Activated CD4-positive, alpha-beta T cell treated with anti-CD3 and anti-CD28 coated beads for 36 hours (primary cell): ENCODE measurements at regions of chr12 and their contacts with region 1.

Region 1: DNA sequence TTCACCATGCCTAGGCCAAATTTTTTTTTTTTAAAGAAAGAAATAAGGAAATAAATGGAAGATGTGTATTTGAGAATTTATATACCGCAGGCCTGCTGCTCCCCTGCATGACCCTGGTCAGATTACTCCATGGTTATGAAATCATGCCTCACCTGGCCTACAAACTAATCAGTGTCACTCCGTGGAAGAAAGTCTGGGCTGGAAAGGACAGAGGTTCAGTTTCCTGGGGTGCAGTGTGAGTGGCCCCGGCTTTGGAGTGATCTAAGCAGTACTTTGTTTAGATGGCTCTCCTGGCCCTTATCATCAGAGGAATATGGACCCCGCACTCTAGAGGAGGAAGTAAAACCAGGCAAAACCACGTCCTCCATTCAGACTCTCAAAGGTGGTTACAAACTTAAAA is 9.6 kb downstream of the APOBEC1 start:
- DNase-seq: no peak
- ATAC-seq: no peak
- H3K4me3 Mint-ChIP-seq: no peak overlapping the region
- H3K27ac Mint-ChIP-seq: no peak overlapping the region
- H3K4me1 Mint-ChIP-seq: no peaks in the 10 kb centered on the region
- H3K27me3 Mint-ChIP-seq: peaks cover 2% of the 10 kb centered on the region

Region 2: DNA sequence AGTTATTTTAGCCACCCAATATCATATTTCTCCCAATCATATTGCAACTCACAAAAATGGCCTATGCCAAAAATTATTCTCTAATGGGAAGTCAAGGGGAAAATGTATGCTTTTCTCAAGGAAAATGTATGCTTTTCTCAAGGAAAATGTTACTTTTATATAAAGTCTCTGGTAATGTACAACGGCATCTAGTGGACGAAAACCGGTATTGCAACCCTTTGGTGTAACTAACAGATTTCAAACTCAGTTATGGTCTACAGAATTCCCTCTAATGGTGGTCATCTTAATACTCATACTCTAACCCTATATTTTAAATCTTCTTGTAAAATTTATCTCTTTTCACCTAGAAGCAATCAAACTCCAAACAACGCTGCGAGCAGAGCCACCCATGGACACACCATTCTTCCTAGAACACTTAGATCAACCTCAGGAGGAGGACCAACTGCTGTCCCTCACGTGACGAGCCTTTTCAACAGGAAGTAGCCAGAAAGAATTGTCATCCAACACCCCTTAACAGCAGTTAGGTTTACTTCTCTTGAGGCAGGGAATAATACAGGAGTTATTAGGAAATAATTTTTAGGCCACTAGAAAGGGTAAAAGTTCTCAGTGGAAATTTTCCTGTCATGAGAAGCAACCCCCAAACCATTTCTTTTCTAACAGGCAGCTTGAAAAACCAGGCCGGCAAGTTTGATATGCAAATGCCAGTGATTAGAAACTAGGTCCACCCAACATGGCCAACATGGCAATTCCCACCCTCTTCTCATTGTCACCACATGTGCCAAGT is 10.5 kb before region 1 on chr12:
- CTCF ChIA-PET with region 1: interaction called, 18 read pairs
- POLR2A ChIA-PET with region 1: no interaction called
- intact Hi-C with region 1: no loop called
- DNase-seq: peak; percentile 49
- ATAC-seq: no peak
- H3K4me3 Mint-ChIP-seq: no peak overlapping the region
- H3K27ac Mint-ChIP-seq: no peak overlapping the region
- H3K4me1 Mint-ChIP-seq: peaks cover 7% of the 10 kb centered on the region
- H3K27me3 Mint-ChIP-seq: no peaks in the 10 kb centered on the region